SK-N-SH (cell line): ENCODE measurements at regions of chr17 and their contacts with region 1.

Region 1: DNA sequence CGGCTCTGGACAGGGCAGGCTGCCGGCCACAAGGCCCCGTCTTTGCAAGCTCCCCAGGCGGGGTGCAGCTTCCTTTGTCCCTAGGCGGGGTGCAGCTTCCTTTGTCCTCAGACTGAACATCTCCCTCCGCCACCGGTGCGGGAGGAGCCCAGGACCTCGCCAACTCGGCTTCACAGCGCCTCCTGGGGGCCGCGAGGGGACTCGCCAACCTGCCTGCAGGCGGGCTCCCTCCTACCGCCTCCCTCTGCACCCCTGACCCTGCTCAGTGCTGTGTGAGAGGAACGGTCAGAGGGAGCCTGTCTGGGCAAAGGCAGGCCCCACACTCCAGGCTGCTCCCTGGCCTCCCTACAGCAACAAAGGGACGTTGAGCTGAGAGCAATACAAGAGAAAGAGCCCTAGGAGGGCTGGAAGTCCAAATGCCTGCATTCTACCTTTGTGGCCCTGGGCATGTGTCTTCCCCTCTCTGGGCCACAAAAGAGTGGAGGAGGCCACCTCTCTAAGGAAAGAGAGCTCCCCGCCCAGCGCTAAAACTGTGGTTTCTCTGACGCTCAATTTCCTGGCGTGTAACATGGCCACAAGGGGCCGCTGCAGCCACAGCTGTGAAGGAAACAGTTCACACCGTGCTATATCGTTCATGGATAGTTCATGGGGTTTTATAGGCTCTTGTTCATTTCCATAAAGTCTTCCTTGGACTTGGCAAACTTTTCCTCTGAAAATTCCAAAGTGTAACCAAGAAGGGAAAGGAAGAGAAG is 20.9 kb upstream of the KRT19 start:
- DNase-seq: peak; percentile 92
- H3K4me3 ChIP-seq: peak overlapping the region; percentile 21 to 25; a peak in 2 of 4 replicates
- H3K27ac ChIP-seq: peak overlapping the region; percentile 85 to 86
- H3K4me1 ChIP-seq: peaks cover 17 to 30% of the 10 kb centered on the region in 2 experiments; a peak in 3 of 4 replicates
- H3K27me3 ChIP-seq: no peaks in the 10 kb centered on the region
- CTCF ChIP-seq: peak; percentile 94
- EP300 ChIP-seq: peak in 1 of 2 experiments; percentile 6; a peak in 2 of 4 replicates
- RAD21 ChIP-seq: peak; percentile 92

Region 2: GRCh38 chr17:40909351-40909750 is 639.7 kb before region 1 on chr17:
- CTCF ChIA-PET with region 1: interaction called, 140 read pairs
- POLR2A ChIA-PET with region 1: no interaction called
- DNase-seq: peak; percentile 75
- H3K4me3 ChIP-seq: no peak overlapping the region; a peak in 1 of 4 replicates
- H3K27ac ChIP-seq: peak overlapping the region in 1 of 2 experiments; percentile 66; a peak in 2 of 4 replicates
- H3K4me1 ChIP-seq: peaks cover 0 to 14% of the 10 kb centered on the region in 2 experiments; a peak in 3 of 4 replicates
- H3K27me3 ChIP-seq: peaks cover 20% of the 10 kb centered on the region; the same call in 1 of the 2 replicates
- CTCF ChIP-seq: peak; percentile 84
- EP300 ChIP-seq: peak in 1 of 2 experiments; percentile 27; a peak in 1 of 4 replicates
- RAD21 ChIP-seq: peak; percentile 92

Region 3: GRCh38 chr17:41211845-41212466 is 337.1 kb before region 1 on chr17:
- CTCF ChIA-PET with region 1: no interaction called
- POLR2A ChIA-PET with region 1: no interaction called
- DNase-seq: no peak
- H3K4me3 ChIP-seq: no peak overlapping the region
- H3K27ac ChIP-seq: no peak overlapping the region
- H3K4me1 ChIP-seq: no peaks in the 10 kb centered on the region
- H3K27me3 ChIP-seq: peaks cover 45% of the 10 kb centered on the region; the same call in 1 of the 2 replicates
- CTCF ChIP-seq: no peak
- EP300 ChIP-seq: no peak
- RAD21 ChIP-seq: no peak

Region 4: DNA sequence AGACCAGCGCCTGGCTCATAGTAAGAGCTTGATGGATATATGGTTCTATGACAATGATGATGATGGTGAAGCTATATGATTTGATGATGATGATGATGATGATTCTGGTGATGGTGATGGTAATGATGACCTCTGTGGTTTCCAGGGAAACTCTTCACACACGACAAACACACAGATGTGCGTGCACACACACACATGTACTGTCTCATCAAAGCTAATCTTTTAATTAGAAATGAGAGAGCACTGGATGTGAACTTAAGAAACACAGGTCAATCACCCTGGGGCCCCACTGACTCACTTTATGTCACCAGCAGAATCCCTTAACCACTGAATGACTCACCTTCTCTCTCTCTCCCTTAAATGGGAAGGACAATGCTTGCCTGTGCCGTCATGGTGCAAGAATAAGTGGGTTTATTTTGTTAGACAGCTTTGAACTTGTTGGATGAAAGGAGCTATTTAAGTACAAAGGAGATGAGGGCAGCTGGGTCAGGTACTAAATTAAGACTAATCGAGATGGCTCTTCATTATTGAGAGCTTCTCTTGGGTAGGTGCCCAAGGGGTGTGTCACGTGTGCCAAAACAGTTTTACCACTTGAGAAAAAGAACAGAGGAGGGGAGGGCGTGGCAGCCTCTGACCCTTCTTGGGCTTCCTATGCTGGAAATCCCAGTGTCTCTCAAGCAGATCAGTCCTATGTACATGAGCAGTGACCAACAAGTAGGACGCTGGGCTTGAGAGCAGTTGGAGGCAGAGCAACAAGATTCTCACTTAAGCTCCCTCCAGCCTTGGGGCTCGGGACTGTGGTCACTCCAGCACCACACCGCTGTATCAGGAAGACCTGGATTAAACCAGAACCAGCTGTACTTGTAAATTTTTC is 145.0 kb before region 1 on chr17:
- CTCF ChIA-PET with region 1: interaction called, 46 read pairs
- POLR2A ChIA-PET with region 1: no interaction called
- DNase-seq: no peak
- H3K4me3 ChIP-seq: no peak overlapping the region
- H3K27ac ChIP-seq: peak overlapping the region in 1 of 2 experiments; percentile 65; a peak in 2 of 4 replicates
- H3K4me1 ChIP-seq: peaks cover 0 to 17% of the 10 kb centered on the region in 2 experiments; a peak in 2 of 4 replicates
- H3K27me3 ChIP-seq: no peaks in the 10 kb centered on the region
- CTCF ChIP-seq: no peak
- EP300 ChIP-seq: peak; percentile 26 to 87; a peak in 3 of 4 replicates
- RAD21 ChIP-seq: no peak

Region 5: GRCh38 chr17:41496820-41497408 is 52.1 kb before region 1 on chr17:
- CTCF ChIA-PET with region 1: interaction called, 67 read pairs
- POLR2A ChIA-PET with region 1: no interaction called
- DNase-seq: peak; percentile 82
- H3K4me3 ChIP-seq: no peak overlapping the region
- H3K27ac ChIP-seq: no peak overlapping the region
- H3K4me1 ChIP-seq: peaks cover 11 to 23% of the 10 kb centered on the region in 2 experiments; a peak in 3 of 4 replicates
- H3K27me3 ChIP-seq: no peaks in the 10 kb centered on the region
- CTCF ChIP-seq: peak; percentile 74
- EP300 ChIP-seq: no peak
- RAD21 ChIP-seq: peak; percentile 73

Region 6: DNA sequence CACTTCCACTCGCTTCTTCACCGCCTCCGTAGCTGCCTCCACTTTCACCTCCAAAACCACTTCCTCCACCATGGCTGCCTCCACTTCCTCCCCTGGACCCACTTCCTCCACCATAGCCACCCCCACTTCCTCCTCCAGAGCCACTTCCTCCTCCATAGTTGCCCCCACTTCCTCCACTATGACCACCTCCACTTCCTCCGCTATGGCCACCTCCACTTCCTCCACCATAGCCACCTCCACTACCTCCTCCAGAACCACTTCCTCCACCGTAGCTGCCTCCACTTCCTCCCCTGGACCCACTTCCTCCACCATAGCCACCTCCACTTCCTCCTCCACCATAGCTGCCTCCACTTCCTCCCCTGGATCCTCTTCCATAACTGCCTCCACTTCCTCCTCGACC is 18.3 kb after region 1 on chr17:
- CTCF ChIA-PET with region 1: interaction called, 58 read pairs
- POLR2A ChIA-PET with region 1: no interaction called
- DNase-seq: no peak
- H3K4me3 ChIP-seq: no peak overlapping the region
- H3K27ac ChIP-seq: no peak overlapping the region
- H3K4me1 ChIP-seq: no peaks in the 10 kb centered on the region
- H3K27me3 ChIP-seq: peaks cover 35% of the 10 kb centered on the region; the same call in 1 of the 2 replicates
- CTCF ChIP-seq: no peak
- EP300 ChIP-seq: no peak
- RAD21 ChIP-seq: no peak

Region 7: DNA sequence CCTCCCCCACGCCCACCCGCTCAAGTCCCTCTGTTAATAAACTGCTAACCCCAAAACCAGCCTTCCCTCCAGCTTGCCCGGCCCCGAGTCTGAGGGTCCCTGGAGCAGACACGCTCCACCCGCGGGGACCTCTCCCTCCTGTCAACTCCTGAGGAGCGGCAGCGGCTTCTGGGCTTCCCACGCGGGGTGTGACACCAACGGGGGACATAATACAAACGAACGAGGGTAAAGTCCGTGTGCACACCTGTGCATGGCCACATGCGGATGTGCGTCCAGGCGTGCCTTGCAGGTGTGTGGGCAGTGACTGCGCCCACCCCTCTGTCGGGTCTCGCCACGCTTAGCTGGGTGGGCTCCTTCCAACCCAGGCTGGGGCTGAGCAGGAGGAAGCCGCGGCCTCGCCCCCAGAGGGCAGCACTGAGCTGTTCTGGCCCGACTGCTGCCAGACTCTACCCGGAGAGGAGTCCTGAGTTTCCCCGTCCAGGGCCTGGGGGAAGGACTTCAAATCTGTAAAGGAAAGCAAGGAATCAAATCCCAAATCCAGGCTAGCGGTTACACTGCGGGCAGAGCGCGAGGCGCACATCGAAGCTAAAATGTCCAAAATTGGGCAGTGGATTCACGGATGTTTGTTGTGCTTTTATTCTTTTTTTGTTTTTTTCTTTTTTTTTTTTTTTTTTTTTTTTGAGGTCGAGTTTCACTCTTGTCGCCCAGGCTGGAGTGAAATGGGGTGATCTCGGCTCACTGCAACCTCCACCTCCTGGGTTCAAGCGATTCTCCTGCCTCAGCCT is 99.6 kb after region 1 on chr17:
- CTCF ChIA-PET with region 1: interaction called, 646 read pairs
- POLR2A ChIA-PET with region 1: interaction called, 4 read pairs
- DNase-seq: peak; percentile 94
- H3K4me3 ChIP-seq: peak overlapping the region; percentile 36 to 49
- H3K27ac ChIP-seq: no peak overlapping the region
- H3K4me1 ChIP-seq: peaks cover 0 to 15% of the 10 kb centered on the region in 2 experiments; a peak in 1 of 4 replicates
- H3K27me3 ChIP-seq: no peaks in the 10 kb centered on the region
- CTCF ChIP-seq: peak; percentile 92
- EP300 ChIP-seq: no peak
- RAD21 ChIP-seq: peak; percentile 70

Region 8: GRCh38 chr17:41762841-41763240 is 213.8 kb after region 1 on chr17:
- CTCF ChIA-PET with region 1: no interaction called
- POLR2A ChIA-PET with region 1: no interaction called
- DNase-seq: no peak
- H3K4me3 ChIP-seq: no peak overlapping the region
- H3K27ac ChIP-seq: no peak overlapping the region
- H3K4me1 ChIP-seq: no peaks in the 10 kb centered on the region; a peak in 1 of 4 replicates
- H3K27me3 ChIP-seq: no peaks in the 10 kb centered on the region
- CTCF ChIP-seq: no peak
- EP300 ChIP-seq: no peak
- RAD21 ChIP-seq: no peak

Region 9: DNA sequence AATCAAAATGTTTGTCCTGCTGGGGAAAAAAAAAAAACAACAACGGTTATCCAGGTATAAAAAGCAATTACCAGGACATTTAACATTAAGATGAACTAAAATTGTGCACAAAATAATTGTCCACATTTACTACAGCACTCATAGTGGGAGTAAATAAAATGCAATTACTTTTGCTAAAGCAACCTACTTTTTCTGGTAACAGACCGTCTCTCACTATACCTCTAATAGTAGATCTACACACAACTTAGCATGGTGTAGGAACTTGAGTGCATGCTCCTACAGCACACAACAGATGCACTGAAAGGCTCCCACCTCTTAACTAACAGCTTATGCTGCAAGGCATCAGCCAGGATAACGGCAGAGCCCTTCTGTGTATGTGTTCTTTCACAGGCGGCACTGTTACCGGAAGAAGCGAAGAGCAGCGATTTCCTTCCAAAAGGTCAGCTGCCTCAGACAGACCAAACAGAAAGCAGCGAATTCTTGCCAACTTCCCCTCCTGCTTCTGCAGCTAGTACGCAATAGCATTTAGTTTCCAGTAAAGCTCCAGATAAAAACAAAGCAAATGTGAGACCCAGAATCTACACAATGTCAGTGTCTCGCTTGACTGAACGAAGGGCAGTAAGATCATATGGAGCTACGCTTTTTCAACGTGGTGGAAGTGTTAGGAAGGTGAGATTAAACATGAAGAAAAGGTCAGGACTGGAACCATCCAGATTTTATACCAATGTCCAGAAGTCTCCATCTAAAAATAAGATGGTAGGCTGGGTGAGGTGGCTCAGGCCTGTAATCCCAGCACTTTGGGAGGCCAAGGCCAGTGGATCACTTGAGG is 699.5 kb after region 1 on chr17:
- CTCF ChIA-PET with region 1: no interaction called
- POLR2A ChIA-PET with region 1: no interaction called
- DNase-seq: peak; percentile 69
- H3K4me3 ChIP-seq: peak overlapping the region; percentile 40 to 51
- H3K27ac ChIP-seq: peak overlapping the region; percentile 73 to 94
- H3K4me1 ChIP-seq: peaks cover 8 to 11% of the 10 kb centered on the region in 2 experiments; a peak in 3 of 4 replicates
- H3K27me3 ChIP-seq: no peaks in the 10 kb centered on the region
- CTCF ChIP-seq: no peak
- EP300 ChIP-seq: no peak
- RAD21 ChIP-seq: no peak